Endothelial cell of umbilical vein (primary cell): ENCODE measurements at regions of chr16 and their contacts with region 1.

Region 1: GRCh38 chr16:27367461-27368357 is 34.3 kb upstream of the IL21R start:
- DNase-seq: peak; percentile 82
- H3K4me3 ChIP-seq: peak overlapping the region in 1 of 3 experiments; percentile 3
- H3K27ac ChIP-seq: peak overlapping the region; percentile 87
- H3K4me1 ChIP-seq: peaks cover 19% of the 10 kb centered on the region
- H3K27me3 ChIP-seq: no peaks in the 10 kb centered on the region
- CTCF ChIP-seq: peak; percentile 64 to 93
- POLR2A ChIP-seq: peak; percentile 49

Region 2: DNA sequence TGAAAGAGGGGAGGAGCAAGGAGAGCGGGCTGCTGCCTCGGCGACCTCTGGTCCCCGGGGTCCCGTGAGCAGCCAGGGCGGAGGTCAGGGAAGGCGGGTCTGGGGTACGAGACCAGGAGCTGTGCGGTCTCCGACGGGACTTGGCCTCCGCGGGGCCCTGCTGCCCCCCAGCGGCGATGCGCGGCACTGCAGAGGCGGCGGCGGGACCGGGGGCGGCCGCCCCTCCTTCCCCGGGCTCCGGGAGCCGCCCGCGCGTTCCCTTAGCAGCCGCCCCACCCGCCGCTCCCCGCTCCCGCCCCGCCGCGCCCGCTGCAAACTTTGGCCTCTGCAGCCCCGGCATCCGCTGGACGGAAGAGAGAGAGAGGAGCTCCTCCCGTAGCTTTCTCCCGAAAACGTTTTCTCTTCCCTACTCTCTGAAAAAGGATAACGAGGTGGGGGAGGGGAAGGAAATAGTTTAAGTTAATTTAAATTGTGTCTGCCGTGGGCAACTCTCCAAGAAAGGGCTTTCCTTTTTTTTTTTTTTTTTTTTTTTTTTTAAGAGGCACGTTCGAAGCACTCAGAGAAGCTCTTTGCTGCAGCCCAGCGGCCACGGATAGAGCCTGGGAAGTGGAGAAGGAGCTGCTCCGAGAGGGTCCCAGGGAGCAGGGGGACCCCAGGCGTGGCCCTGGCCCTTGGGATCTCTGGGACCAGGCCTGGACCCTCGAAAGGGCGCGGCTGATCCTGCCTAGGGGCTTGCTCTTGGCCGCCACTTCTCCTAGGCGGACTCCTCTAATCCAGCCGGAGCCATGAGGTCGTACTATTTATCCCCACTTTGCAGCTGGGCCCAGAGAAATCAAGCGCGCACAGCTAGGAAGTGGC is 257.8 kb before region 1 on chr16:
- CTCF ChIA-PET with region 1: interaction called, 19 read pairs
- POLR2A ChIA-PET with region 1: no interaction called
- dilution Hi-C with region 1: no loop called
- intact Hi-C with region 1: no loop called
- DNase-seq: peak; percentile 62
- H3K4me3 ChIP-seq: peak overlapping the region in 2 of 3 experiments; percentile 16 to 22
- H3K27ac ChIP-seq: no peak overlapping the region
- H3K4me1 ChIP-seq: no peaks in the 10 kb centered on the region
- H3K27me3 ChIP-seq: no peaks in the 10 kb centered on the region
- CTCF ChIP-seq: peak; percentile 72 to 88
- POLR2A ChIP-seq: no peak

Region 3: DNA sequence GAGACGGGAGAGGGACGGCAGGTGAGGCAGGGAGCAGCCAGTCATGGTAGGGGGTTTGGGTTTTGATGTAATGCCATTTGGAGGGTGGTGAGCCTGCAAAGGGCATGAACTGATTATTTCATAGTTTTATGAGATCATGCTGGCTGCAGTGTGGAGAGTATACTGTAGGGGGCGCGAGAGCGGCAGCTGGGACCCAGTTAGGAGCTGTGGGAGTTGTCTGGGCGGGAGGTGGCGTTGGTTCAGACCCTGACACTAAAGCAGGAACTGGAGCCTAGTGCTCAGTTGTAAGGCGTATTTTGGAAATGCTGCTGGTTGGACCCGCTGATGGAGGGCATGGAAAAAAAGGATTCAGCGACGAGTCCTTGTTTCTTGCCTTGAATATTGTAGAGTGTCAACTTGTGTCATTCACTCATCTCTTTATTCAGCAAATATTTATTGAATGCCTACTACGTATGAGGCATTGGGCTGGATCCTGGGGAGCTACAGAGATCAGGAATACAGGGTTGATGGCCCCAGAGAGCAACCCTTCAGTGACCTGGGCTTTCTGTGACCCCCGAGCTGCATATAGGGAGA is 188.1 kb before region 1 on chr16:
- CTCF ChIA-PET with region 1: interaction called, 136 read pairs
- POLR2A ChIA-PET with region 1: interaction called, 4 read pairs
- dilution Hi-C with region 1: no loop called
- intact Hi-C with region 1: loop called (anchors 1 kb)
- DNase-seq: peak; percentile 77
- H3K4me3 ChIP-seq: no peak overlapping the region
- H3K27ac ChIP-seq: no peak overlapping the region
- H3K4me1 ChIP-seq: peaks cover 18% of the 10 kb centered on the region
- H3K27me3 ChIP-seq: peaks cover 10% of the 10 kb centered on the region in 2 experiments
- CTCF ChIP-seq: peak; percentile 94 to 97
- POLR2A ChIP-seq: no peak

Region 4: GRCh38 chr16:27222249-27223225 is 145.2 kb before region 1 on chr16:
- CTCF ChIA-PET with region 1: interaction called, 41 read pairs
- POLR2A ChIA-PET with region 1: interaction called, 3 read pairs
- dilution Hi-C with region 1: no loop called
- intact Hi-C with region 1: no loop called
- DNase-seq: no peak
- H3K4me3 ChIP-seq: no peak overlapping the region
- H3K27ac ChIP-seq: no peak overlapping the region
- H3K4me1 ChIP-seq: no peaks in the 10 kb centered on the region
- H3K27me3 ChIP-seq: no peaks in the 10 kb centered on the region
- CTCF ChIP-seq: no peak
- POLR2A ChIP-seq: no peak

Region 5: DNA sequence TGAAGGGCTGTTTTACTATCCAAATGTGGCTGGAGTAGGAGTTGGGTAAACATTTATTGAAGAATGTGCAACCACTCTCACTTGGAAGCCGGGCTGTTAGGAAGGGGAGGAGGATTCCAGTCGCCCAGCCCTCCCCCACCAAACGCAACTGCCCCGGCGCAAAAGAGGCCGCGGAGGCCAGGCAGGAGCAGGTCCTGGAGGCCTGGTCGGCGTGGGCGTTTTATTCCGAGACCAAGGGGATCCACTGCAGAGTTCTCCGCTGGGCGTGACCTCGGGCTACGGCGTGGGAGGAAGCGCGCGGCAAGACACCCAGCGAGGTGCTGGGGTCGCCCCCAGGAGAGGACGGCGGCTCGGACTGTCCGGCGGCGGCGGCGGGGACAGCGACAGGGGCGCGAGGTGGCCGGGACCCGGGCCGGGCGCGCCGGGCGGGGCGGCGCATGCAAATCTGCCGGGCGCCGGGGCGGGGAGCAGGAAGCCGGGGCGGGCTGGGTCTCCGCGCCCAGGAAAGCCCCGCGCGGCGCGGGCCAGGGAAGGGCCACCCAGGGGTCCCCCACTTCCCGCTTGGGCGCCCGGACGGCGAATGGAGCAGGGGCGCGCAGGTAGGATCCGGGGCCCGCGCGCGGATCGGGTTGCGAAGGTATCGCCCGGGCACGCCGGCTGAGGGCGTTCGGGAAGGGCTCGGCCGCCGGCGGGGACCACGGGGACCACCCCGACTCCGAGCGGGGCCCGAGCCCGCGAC is 54.1 kb before region 1 on chr16 and contains the start of gene IL4R:
- CTCF ChIA-PET with region 1: interaction called, 5 read pairs
- POLR2A ChIA-PET with region 1: interaction called, 3 read pairs
- dilution Hi-C with region 1: no loop called
- intact Hi-C with region 1: loop called (anchors 1 kb)
- DNase-seq: peak; percentile 59
- H3K4me3 ChIP-seq: peak within 1 kb of the TSS; percentile 78 to 95 (median 86)
- H3K27ac ChIP-seq: peak within 1 kb of the TSS; percentile 99
- H3K4me1 ChIP-seq: peaks cover 46% of the 10 kb centered on the region
- H3K27me3 ChIP-seq: no peaks in the 10 kb centered on the region
- CTCF ChIP-seq: no peak
- POLR2A ChIP-seq: no peak
- total RNA-seq, gene IL4R: 139 and 150 TPM in 2 replicates

Region 6: DNA sequence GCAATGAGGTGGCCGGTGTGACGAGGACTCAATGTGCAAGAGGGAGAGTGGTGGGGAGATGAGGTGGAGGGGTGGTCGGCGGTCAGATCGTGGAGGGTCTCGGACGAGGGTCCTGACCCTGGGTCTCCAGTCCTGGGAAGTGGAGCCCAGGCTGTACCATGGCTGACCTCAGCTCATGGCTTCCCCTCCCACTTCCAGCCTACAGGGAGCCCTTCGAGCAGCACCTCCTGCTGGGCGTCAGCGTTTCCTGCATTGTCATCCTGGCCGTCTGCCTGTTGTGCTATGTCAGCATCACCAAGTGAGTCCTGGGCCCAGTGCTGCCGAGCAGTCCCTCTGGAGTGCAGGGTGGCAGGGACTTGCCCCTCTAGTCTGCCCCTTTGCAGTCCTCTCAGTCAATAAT is 12.1 kb before region 1 on chr16:
- CTCF ChIA-PET with region 1: interaction called, 19 read pairs
- POLR2A ChIA-PET with region 1: no interaction called
- dilution Hi-C with region 1: no loop called
- intact Hi-C with region 1: no loop called
- DNase-seq: peak; percentile 46
- H3K4me3 ChIP-seq: no peak overlapping the region
- H3K27ac ChIP-seq: no peak overlapping the region
- H3K4me1 ChIP-seq: peaks cover 7% of the 10 kb centered on the region
- H3K27me3 ChIP-seq: no peaks in the 10 kb centered on the region
- CTCF ChIP-seq: peak; percentile 44 to 58
- POLR2A ChIP-seq: no peak

Region 7: DNA sequence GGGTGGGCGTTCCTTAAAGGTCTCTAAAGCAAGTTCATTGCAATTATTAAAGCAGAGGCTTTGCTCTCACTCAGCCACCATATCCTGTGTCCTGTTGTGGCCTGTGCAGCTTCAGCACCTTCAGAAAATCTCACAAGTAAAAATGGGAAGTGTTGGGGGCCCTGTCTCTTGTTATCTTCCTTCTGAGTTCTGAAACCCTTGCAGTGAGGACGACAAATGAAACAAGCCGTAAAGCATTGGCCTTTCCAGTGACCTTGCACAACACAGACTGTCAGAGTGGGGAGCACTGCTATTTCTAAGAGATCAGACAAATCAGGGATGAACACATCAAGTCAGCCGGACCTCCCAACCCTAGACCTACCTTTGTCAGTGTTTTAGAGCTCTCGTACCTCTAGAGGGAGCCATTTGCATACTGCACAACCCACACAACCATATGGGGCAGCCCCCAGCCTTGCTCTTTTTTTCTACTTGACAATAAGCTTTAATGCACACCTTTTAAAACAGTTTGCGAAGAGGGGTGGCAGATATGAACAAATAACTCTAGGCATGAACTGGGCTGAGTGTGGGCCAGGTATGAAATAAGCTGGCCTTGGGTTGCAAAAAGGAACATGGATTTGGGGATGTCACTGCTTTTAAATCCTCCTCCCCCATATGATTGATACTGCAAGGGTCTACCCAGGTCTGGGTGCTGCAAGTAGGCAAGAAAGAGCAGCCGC is 272.0 kb after region 1 on chr16:
- CTCF ChIA-PET with region 1: no interaction called
- POLR2A ChIA-PET with region 1: no interaction called
- dilution Hi-C with region 1: no loop called
- intact Hi-C with region 1: no loop called
- DNase-seq: peak; percentile 64
- H3K4me3 ChIP-seq: no peak overlapping the region
- H3K27ac ChIP-seq: no peak overlapping the region
- H3K4me1 ChIP-seq: no peaks in the 10 kb centered on the region
- H3K27me3 ChIP-seq: no peaks in the 10 kb centered on the region
- CTCF ChIP-seq: peak; percentile 69 to 81
- POLR2A ChIP-seq: no peak